Panc1 (cell line): ENCODE measurements at regions of chr4 and their contacts with region 1.

Region 1: GRCh38 chr4:121736735-121737351 is 28.1 kb downstream of the SMIM43 start:
- DNase-seq: no peak
- ATAC-seq: peak; percentile 87
- H3K4me3 ChIP-seq: no peak overlapping the region
- H3K27ac ChIP-seq: no peak overlapping the region
- H3K4me1 ChIP-seq: no peaks in the 10 kb centered on the region
- H3K27me3 ChIP-seq: no peaks in the 10 kb centered on the region
- CTCF ChIP-seq: peak; percentile 63

Region 2: DNA sequence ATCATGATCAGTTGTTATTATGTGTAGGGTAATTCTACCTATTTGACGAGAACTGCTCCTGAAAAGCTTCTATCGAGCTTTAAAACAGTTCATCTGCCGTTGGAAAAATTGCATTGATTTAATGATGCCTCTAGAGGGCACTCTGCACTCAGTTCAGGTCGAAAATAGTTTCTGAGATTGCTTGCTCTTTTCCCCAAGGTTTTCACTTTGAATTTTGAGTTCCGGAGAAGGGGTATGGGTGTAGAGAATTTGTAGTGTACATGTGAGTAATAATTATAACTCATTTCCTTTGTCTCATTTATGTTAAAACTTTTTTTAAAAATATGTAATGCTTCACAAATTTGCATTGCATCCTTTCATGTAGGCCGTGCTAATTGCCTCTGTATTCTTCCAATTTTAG is 544.4 kb before region 1 on chr4:
- CTCF ChIA-PET with region 1: no interaction called
- POLR2A ChIA-PET with region 1: no interaction called
- in situ Hi-C with region 1: no loop called
- intact Hi-C with region 1: loop called (anchors 5 kb)
- DNase-seq: peak; percentile 15
- ATAC-seq: no peak
- H3K4me3 ChIP-seq: no peak overlapping the region
- H3K27ac ChIP-seq: no peak overlapping the region
- H3K4me1 ChIP-seq: no peaks in the 10 kb centered on the region
- H3K27me3 ChIP-seq: no peaks in the 10 kb centered on the region
- CTCF ChIP-seq: peak; percentile 77; the same call in 1 of the 2 replicates

Region 3: GRCh38 chr4:121370729-121371325 is 366.0 kb before region 1 on chr4:
- CTCF ChIA-PET with region 1: interaction called, 3 read pairs
- POLR2A ChIA-PET with region 1: no interaction called
- in situ Hi-C with region 1: no loop called
- intact Hi-C with region 1: loop called (anchors 5 kb)
- DNase-seq: peak; percentile 12
- ATAC-seq: peak; percentile 58; the same call in 1 of the 2 replicates
- H3K4me3 ChIP-seq: no peak overlapping the region
- H3K27ac ChIP-seq: no peak overlapping the region
- H3K4me1 ChIP-seq: no peaks in the 10 kb centered on the region
- H3K27me3 ChIP-seq: no peaks in the 10 kb centered on the region
- CTCF ChIP-seq: peak; percentile 50; the same call in 1 of the 2 replicates

Region 4: DNA sequence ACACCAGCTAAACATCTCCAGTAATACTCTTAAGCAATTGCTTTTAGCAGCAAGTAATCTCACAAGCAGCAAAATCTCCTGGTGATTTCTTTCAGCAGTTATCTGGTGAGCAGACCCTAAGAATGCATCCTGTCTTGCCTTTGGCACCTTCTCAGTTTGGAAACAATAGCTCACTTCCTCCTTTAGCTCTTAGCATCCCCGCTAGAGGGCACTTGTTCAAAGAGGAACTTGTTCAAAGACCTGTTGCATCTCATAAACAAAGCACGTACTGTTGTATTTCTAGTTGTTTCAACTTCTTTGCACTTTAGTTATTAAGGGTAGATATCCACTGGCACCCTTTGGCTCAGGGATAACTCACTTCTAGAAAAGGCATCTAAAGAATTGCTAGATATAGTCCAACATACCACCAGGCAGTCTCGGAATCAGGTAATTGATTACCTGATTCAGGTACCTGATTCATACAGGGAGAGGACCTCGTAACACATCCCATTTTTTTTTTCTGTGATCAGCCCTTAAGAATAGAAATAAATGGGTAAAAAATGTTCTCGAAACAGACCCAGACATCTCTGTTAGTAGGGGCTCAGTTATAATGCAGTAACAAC is 274.1 kb before region 1 on chr4:
- CTCF ChIA-PET with region 1: no interaction called
- POLR2A ChIA-PET with region 1: no interaction called
- in situ Hi-C with region 1: no loop called
- intact Hi-C with region 1: loop called (anchors 2 kb)
- DNase-seq: peak; percentile 35
- ATAC-seq: peak; percentile 77
- H3K4me3 ChIP-seq: no peak overlapping the region
- H3K27ac ChIP-seq: no peak overlapping the region
- H3K4me1 ChIP-seq: no peaks in the 10 kb centered on the region
- H3K27me3 ChIP-seq: no peaks in the 10 kb centered on the region
- CTCF ChIP-seq: peak; percentile 72

Region 5: GRCh38 chr4:121484633-121485032 is 252.2 kb before region 1 on chr4:
- CTCF ChIA-PET with region 1: no interaction called
- POLR2A ChIA-PET with region 1: no interaction called
- in situ Hi-C with region 1: no loop called
- intact Hi-C with region 1: loop called (anchors 2 kb)
- DNase-seq: peak; percentile 20
- ATAC-seq: peak; percentile 76; the same call in 1 of the 2 replicates
- H3K4me3 ChIP-seq: no peak overlapping the region
- H3K27ac ChIP-seq: no peak overlapping the region
- H3K4me1 ChIP-seq: no peaks in the 10 kb centered on the region
- H3K27me3 ChIP-seq: no peaks in the 10 kb centered on the region
- CTCF ChIP-seq: peak; percentile 74